ENCODE measurements at regions of chr14 and their contacts with region 1.

Region 1: DNA sequence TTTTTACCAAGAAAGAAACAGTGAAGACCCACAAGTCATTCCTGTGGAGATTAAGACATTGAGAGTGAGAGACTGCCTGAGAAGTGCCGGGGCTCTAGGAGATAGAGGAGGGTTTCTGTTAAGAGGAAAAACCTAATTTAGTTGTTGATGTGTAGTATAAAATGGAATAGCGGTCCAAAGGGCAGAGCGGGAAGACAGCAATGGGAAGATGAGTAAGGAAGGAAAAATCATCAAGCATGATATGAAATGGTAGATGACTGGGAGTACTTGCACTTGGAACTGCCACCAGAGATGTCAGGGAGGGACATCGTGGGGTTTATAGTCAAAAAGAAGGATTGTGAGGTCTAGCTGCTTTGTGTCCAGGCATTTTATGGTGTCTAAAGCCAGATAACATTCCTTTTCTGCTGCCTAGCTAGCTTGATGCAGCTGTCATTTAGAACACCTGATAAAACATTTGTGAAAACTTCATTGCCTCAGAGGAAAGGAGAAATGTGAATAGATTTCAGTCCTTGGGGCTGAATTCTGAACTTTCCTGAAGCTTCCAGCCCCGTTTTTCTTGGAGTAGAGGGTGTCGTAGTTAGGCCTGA is 20.1 kb upstream of the PSEN1 start:
- DNase-seq: no peak
- ATAC-seq: no peak

Region 2: GRCh38 chr14:72926292-72927028 is 189.7 kb before region 1 on chr14 and contains the start of gene DCAF4:
- intact Hi-C with region 1: loop called (anchors 5 kb)
- DNase-seq: peak; percentile 95
- ATAC-seq: peak; percentile 99
- total RNA-seq, gene DCAF4: 14.0 TPM

Region 3: GRCh38 chr14:73245401-73246325 is 129.5 kb after region 1 on chr14:
- intact Hi-C with region 1: no loop called
- DNase-seq: peak; percentile 76
- ATAC-seq: peak; percentile 77

Region 4: DNA sequence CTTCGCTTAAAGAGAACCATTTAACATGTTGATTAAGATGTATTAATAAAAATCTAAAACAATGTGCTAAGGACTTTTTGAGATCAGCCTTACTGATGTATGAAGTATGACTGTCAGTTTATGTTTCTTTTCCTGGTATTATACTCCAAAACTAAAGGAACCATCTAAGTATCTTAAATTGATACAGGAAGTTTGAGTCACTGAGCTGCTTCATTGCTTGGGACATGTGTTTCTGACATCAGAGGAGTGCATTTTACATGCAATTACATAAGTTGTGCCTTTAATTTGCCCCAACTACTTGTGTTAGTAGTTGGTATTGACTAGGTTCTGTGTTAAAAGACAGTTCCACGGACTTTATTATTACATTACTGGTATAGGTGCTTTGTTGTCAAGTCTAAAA is 1708.8 kb after region 1 on chr14:
- intact Hi-C with region 1: loop called (anchors 5 kb)
- DNase-seq: no peak
- ATAC-seq: no peak